PC-9 (cell line): ENCODE measurements at regions of chr11 and their contacts with region 1.

Region 1: GRCh38 chr11:10792398-10792975 is 16.2 kb downstream of the EIF4G2 start:
- DNase-seq: peak; percentile 69 to 85
- H3K4me3 ChIP-seq: no peak overlapping the region
- H3K27ac ChIP-seq: no peak overlapping the region
- H3K4me1 ChIP-seq: no peaks in the 10 kb centered on the region
- H3K27me3 ChIP-seq: no peaks in the 10 kb centered on the region
- CTCF ChIP-seq: peak; percentile 85

Region 2: GRCh38 chr11:10866893-10867331 is 74.4 kb after region 1 on chr11:
- CTCF ChIA-PET with region 1: no interaction called
- POLR2A ChIA-PET with region 1: no interaction called
- intact Hi-C with region 1: no loop called
- DNase-seq: no peak
- H3K4me3 ChIP-seq: no peak overlapping the region
- H3K27ac ChIP-seq: no peak overlapping the region
- H3K4me1 ChIP-seq: 0 out of 2 replicates have a peak, but pooled peaks cover 3% of the 10 kb centered on the region
- H3K27me3 ChIP-seq: no peaks in the 10 kb centered on the region
- CTCF ChIP-seq: no peak

Region 3: GRCh38 chr11:10906513-10906912 is 114.0 kb after region 1 on chr11:
- CTCF ChIA-PET with region 1: no interaction called
- POLR2A ChIA-PET with region 1: interaction called, 10 read pairs
- intact Hi-C with region 1: no loop called
- DNase-seq: peak in 1 of 2 experiments; percentile 44
- H3K4me3 ChIP-seq: no peak overlapping the region
- H3K27ac ChIP-seq: no peak overlapping the region
- H3K4me1 ChIP-seq: peaks cover 52% of the 10 kb centered on the region
- H3K27me3 ChIP-seq: no peaks in the 10 kb centered on the region
- CTCF ChIP-seq: no peak

Region 4: GRCh38 chr11:11022125-11022730 is 229.7 kb after region 1 on chr11:
- CTCF ChIA-PET with region 1: no interaction called
- POLR2A ChIA-PET with region 1: no interaction called
- intact Hi-C with region 1: loop called (anchors 1 kb)
- DNase-seq: no peak
- H3K4me3 ChIP-seq: no peak overlapping the region
- H3K27ac ChIP-seq: no peak overlapping the region
- H3K4me1 ChIP-seq: no peaks in the 10 kb centered on the region
- H3K27me3 ChIP-seq: no peaks in the 10 kb centered on the region
- CTCF ChIP-seq: peak; percentile 61